ENCODE measurements at regions of chr17 and their contacts with region 1.

Region 1: DNA sequence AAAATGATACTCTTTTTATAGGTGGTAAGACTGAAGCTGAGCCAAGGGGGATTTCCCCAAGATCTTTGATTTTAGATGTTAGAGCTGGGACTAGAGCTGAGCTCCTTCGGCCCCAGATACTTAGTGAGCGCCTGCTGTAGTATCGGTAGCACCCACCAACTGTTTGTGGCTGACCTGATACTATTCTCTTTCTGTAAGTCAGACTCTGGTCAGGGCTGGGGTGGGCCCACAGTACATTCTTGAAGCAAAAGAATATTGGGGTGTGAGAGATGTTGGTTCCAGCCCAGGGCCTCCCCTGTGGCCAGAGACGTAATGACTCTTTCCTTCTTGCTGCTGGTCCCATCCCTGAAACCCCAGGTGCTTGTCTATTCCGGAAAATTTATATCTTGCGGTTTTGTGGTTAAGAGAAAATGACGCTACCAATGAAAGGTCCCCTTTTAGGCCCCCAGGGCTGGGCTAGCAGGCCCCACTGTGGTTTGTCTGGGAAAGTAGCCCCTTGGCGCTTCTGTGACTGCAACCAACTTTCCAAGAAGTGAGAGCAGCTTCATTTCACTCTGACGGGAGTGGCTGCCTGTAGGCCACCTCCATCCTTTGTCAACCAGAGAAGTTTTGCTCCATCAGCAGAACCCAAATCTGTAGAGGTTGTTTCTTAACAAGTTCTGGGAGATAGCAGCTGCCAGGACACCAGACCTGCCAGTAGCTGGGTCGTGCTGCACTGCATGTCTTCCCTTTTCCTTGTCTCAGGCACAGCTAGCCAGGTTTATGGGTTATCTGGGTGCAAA is 86.4 kb upstream of the LGALS9 start:
- DNase-seq: peak; percentile 63
- H3K4me3 Mint-ChIP-seq: peak overlapping the region; percentile 31
- H3K27ac Mint-ChIP-seq: peak overlapping the region; percentile 87
- H3K4me1 Mint-ChIP-seq: peaks cover 71% of the 10 kb centered on the region
- H3K27me3 Mint-ChIP-seq: peaks cover 2% of the 10 kb centered on the region

Region 2: DNA sequence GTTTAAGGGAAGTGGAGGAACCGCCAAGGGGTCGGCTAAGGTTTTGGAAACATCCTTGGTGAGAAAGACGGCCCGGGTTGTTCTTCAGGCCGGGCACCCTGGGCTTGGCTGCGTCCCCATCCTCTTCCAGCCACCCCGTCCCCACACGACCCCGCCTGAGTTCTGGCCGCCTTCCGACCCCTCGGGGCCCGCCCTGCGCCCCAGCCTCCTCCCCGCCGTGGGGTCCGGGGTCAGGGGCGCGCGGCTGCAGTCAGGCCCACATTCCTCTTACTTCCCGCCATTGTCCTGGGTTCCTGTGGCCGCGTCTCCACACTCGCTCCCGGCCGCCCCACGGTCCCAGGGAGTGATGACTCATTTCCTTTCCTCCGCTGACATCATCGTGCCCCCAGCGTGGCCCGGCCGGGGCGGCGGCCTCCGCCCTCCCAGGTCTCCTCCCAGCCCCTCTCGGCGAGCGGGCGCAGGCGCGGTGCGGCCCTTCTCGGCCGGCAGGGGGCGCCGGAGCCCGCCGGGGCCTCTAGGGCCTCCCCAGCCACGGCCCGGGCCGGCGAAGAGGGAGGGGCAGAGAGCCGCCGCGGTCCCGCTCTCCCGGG is 191.0 kb before region 1 on chr17:
- intact Hi-C with region 1: loop called (anchors 5 kb)
- DNase-seq: peak; percentile 84
- H3K4me3 Mint-ChIP-seq: peak overlapping the region; percentile 78
- H3K27ac Mint-ChIP-seq: peak overlapping the region; percentile 96
- H3K4me1 Mint-ChIP-seq: peaks cover 26% of the 10 kb centered on the region
- H3K27me3 Mint-ChIP-seq: no peaks in the 10 kb centered on the region

Region 3: DNA sequence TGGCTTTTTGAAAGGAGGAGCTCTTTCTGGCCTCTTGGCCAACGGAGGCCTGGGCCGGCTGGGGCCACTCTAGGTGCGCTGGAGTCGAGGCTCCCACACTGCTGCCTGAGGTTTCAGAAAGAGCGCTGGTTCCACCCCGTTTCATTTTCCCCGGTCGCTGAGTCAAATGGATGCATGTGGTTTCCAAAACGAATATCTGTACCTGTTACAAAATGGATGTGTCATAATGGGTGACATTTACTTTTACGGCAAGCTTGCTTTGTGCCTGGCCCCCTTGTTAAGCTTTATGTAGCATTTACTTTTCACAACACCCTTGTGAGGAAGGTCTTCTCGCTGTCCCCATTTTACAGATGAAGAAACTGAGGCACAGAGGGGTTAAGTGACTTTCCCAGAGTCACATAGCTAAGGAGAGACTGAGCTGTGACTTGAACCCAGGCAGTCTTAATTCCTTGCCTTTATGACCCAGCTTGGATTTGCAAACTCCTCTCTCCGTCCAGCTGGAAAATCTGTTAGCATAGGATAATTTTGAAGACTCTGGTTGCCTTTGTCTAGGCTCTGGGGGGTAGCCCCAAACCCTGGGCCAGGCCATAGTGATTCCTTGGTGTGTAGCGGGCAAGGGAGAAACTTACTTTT is 77.7 kb before region 1 on chr17:
- intact Hi-C with region 1: loop called (anchors 1 kb)
- DNase-seq: peak; percentile 77
- H3K4me3 Mint-ChIP-seq: peak overlapping the region; percentile 55
- H3K27ac Mint-ChIP-seq: peak overlapping the region; percentile 86
- H3K4me1 Mint-ChIP-seq: peaks cover 81% of the 10 kb centered on the region
- H3K27me3 Mint-ChIP-seq: no peaks in the 10 kb centered on the region

Region 4: DNA sequence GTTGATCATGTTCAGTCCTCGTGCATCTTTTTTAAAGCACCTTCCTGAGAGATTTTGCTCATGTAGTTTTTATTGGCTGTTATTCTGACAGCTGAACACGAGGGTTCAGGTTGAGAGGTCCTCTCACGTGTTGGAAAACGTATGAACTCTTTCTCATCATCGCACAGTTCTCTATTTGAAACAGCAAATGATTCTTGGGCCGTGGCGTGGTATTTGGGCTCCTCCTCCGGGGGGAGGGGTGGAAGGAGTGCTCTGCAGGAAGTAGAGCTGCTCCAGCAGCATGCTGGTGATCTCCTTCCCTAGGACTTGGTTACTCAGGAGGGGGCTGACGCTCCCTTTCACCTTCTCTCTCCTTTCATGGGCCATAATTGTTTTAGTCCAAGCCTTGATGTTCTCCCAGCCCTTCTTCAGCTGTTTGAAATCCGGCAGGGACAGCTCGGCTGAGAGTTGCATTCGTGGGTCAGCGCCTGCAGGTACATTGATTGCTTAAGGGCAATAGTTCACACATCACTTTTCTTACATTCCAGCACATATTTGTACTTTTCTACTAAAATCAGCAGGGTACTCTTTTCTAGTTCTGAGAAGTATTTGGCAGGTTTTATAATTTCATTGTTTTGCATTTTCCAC is 17.8 kb before region 1 on chr17:
- intact Hi-C with region 1: loop called (anchors 2 kb)
- DNase-seq: peak; percentile 46
- H3K4me3 Mint-ChIP-seq: no peak overlapping the region
- H3K27ac Mint-ChIP-seq: peak overlapping the region; percentile 54
- H3K4me1 Mint-ChIP-seq: peaks cover 63% of the 10 kb centered on the region
- H3K27me3 Mint-ChIP-seq: no peaks in the 10 kb centered on the region

Region 5: DNA sequence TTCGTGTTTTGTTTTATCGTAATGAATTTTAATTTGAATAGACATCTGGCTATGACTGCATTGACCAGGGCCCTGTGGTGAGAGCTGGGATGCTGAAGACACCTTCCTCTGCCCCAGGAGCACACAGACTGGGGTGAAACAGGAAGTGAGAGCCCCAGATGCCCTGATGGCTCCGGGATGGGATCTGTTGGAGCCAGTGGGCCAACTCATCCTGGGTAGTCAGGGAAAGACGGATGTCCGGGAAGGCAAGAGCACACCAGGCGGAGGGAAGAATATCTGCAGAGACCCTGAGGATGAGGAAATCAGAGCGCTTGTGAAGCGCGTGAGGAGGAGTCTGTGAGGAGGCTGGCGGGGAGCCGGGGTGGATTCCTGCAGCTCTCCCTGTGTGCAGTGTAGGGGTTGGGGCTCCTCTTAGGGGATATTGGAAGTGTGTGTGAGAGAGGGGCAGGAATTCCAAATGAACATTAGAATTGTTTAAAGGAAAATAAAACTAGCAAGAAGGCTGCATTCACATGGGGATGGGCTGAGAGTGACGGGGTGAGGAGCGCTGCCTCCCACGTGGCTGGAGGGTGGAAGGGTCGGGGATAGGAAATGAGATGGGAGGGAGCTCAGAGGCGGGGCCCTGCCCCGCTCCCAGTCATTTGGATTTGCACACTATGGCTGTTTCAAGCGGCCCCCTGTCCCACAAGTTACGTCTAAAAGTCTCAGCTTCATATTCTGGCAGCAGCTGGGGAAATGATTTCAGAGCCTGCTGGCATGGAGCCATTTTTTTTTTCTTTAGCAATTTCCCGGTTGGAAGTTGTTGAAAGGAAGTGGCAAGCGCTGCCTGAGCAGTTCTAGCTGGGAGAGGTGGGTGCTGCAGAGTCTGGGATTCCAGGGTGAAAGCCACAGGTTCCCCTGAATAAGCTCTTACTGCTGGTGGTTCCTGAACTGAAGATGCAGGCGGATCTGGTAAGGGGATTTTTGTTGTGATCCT is 15.3 kb after region 1 on chr17:
- intact Hi-C with region 1: no loop called
- DNase-seq: no peak
- H3K4me3 Mint-ChIP-seq: no peak overlapping the region
- H3K27ac Mint-ChIP-seq: no peak overlapping the region
- H3K4me1 Mint-ChIP-seq: peaks cover 26% of the 10 kb centered on the region
- H3K27me3 Mint-ChIP-seq: no peaks in the 10 kb centered on the region

Region 6: GRCh38 chr17:27578718-27579085 is 34.2 kb after region 1 on chr17:
- intact Hi-C with region 1: loop called (anchors 1 kb)
- DNase-seq: peak; percentile 41
- H3K4me3 Mint-ChIP-seq: no peak overlapping the region
- H3K27ac Mint-ChIP-seq: peak overlapping the region; percentile 90
- H3K4me1 Mint-ChIP-seq: peaks cover 68% of the 10 kb centered on the region
- H3K27me3 Mint-ChIP-seq: no peaks in the 10 kb centered on the region

Region 7: GRCh38 chr17:27692766-27693165 is 148.2 kb after region 1 on chr17:
- intact Hi-C with region 1: no loop called
- DNase-seq: no peak
- H3K4me3 Mint-ChIP-seq: no peak overlapping the region
- H3K27ac Mint-ChIP-seq: no peak overlapping the region
- H3K4me1 Mint-ChIP-seq: no peaks in the 10 kb centered on the region
- H3K27me3 Mint-ChIP-seq: peaks cover 5% of the 10 kb centered on the region

Region 8: DNA sequence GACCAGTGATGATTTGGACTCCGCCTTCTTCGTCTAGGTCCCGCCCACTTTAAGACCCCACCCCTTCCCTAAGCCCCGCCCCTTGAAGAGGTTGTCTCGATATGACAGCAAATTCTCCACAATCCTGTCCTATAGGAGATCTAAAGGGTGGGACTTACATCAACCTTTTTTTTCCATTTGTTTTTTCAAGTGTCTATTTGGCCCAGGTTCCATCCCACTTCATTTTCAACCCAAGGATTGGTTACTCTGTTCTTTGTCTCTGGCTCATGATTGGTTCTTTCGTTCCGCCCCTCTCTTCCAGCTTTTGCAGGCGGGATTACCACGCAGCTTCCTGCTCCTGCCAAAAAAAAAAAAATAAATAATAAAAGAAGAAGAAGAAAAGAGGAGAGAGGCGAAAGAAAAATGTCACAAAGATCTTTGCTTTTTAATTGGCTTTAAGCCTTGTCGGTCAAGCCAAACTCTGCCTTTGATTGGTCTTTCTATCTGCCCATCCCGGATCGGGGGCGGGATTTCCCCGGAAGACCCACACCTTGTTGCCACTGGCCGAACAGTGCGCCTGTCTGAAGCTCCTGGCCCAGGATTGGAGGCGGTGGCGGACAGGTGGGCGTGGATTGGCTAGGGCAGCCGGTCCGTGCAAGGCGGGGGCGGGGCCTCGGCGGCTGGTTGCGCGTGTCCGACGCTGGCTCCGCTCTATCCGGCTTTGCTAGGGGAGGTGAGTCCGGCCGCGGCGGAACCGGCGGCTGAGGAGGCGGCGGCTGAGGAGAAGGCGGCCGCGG is 496.7 kb after region 1 on chr17:
- intact Hi-C with region 1: loop called (anchors 10 kb)
- DNase-seq: peak; percentile 100
- H3K4me3 Mint-ChIP-seq: peak overlapping the region; percentile 80
- H3K27ac Mint-ChIP-seq: peak overlapping the region; percentile 76
- H3K4me1 Mint-ChIP-seq: peaks cover 48% of the 10 kb centered on the region
- H3K27me3 Mint-ChIP-seq: peaks cover 9% of the 10 kb centered on the region

Measured in activated T-helper 2 cell treated with anti-CD3 and anti-CD28 coated beads, Interferon-gamma antibody, Interleukin-2, Interleukin-4, amounts not matched to agents 10 μg/mL and 5 μg/mL and 100 μg/mL, durations not matched to agents 14 hours and 24 hours and 36 hours (primary cell).